Activated CD4-positive, alpha-beta memory T cell treated with anti-CD3 and anti-CD28 coated beads for 36 hours (primary cell): ENCODE measurements at regions of chr6 and their contacts with region 1.

Region 1: DNA sequence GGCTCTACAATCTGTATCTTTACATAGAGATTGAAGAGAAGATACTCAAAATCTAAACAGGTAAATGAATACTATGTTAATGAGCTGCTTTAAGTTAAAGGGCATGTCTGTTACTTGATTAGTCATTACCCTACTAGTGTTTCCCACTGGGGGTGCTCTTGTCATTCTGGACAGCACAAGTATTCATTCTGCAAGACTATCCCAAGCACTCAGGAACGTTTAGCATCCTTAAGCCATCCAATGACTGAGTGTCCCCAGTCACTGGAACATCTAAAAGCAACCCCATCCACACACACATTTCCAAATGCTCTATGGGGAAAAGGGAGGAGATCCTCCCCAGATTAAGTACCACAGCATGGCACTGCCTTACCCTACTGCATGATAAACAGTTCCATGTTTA is 25.7 kb downstream of the EZR start:
- DNase-seq: no peak
- H3K4me3 Mint-ChIP-seq: no peak overlapping the region
- H3K27ac Mint-ChIP-seq: peak overlapping the region; percentile 49
- H3K4me1 Mint-ChIP-seq: peaks cover 82% of the 10 kb centered on the region
- H3K27me3 Mint-ChIP-seq: no peaks in the 10 kb centered on the region

Region 2: DNA sequence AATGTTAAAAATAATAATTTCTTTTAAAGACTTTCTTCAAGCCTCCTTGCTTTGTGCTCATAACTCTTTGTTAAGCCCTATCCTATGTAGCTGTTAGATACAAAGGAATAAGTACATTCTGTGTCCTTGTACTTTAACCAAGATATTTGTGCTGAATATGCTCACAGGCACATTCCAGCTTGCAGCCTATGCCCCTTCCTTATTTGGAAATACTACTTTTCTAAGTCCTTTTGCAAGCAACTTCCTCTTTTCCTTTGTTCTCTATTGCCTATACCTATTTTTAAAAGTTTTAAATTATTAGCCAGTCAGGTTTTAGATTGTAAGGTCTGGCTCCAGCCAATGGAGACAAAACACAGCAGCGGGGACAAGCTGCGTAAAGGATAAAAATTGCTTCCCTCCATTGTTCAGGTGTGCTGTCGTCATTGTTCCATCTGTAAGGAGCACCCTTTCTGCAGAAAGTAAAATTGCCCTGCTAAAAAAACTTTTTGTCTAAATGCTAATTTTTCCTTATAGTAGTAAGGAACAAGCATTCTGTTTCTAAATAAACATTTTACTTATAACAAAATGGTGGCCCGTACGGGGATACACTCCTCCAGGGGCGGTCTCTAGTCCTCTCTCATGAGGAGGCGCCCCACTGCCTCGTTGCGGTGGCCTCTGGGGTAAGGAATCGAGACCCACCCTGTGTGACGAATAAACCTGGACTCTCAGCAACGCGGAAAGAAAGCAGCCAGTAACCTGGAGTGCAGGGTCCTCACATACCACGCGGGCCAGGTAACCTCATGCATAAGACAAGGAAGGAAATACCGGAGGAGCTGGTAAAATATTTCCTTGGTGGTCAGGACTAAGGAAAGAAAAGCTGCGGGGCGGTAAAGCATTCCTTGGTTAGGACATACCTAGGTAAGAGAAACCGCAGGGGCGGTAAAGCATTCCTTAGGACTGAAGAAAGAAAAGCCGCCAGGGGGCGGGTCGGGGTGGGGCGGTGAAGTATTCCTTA is 63.2 kb before region 1 on chr6:
- CTCF ChIA-PET with region 1: no interaction called
- POLR2A ChIA-PET with region 1: no interaction called
- intact Hi-C with region 1: no loop called
- DNase-seq: no peak
- H3K4me3 Mint-ChIP-seq: no peak overlapping the region
- H3K27ac Mint-ChIP-seq: no peak overlapping the region
- H3K4me1 Mint-ChIP-seq: no peaks in the 10 kb centered on the region
- H3K27me3 Mint-ChIP-seq: no peaks in the 10 kb centered on the region

Region 3: GRCh38 chr6:158819213-158819909 is 25.9 kb after region 1 on chr6 and contains the start of gene EZR:
- CTCF ChIA-PET with region 1: interaction called, 5 read pairs
- POLR2A ChIA-PET with region 1: interaction called, 4 read pairs
- intact Hi-C with region 1: loop called (anchors 2 kb)
- DNase-seq: peak; percentile 91
- H3K4me3 Mint-ChIP-seq: peak within 1 kb of the TSS; percentile 100
- H3K27ac Mint-ChIP-seq: peak within 1 kb of the TSS; percentile 99
- H3K4me1 Mint-ChIP-seq: peaks cover 43% of the 10 kb centered on the region
- H3K27me3 Mint-ChIP-seq: no peaks in the 10 kb centered on the region
- total RNA-seq, gene EZR: 255 to 256 TPM

Region 4: GRCh38 chr6:158863646-158864045 is 70.2 kb after region 1 on chr6:
- CTCF ChIA-PET with region 1: no interaction called
- POLR2A ChIA-PET with region 1: no interaction called
- intact Hi-C with region 1: no loop called
- DNase-seq: no peak
- H3K4me3 Mint-ChIP-seq: no peak overlapping the region
- H3K27ac Mint-ChIP-seq: no peak overlapping the region
- H3K4me1 Mint-ChIP-seq: peaks cover 14% of the 10 kb centered on the region
- H3K27me3 Mint-ChIP-seq: no peaks in the 10 kb centered on the region

Region 5: GRCh38 chr6:158958504-158959386 is 165.3 kb after region 1 on chr6:
- CTCF ChIA-PET with region 1: interaction called, 12 read pairs
- POLR2A ChIA-PET with region 1: no interaction called
- intact Hi-C with region 1: no loop called
- DNase-seq: peak; percentile 37
- H3K4me3 Mint-ChIP-seq: no peak overlapping the region
- H3K27ac Mint-ChIP-seq: no peak overlapping the region
- H3K4me1 Mint-ChIP-seq: peaks cover 5% of the 10 kb centered on the region
- H3K27me3 Mint-ChIP-seq: no peaks in the 10 kb centered on the region